Left cardiac atrium (tissue), 4 donors: ENCODE measurements at regions of chr4 and their contacts with region 1.

Region 1: DNA sequence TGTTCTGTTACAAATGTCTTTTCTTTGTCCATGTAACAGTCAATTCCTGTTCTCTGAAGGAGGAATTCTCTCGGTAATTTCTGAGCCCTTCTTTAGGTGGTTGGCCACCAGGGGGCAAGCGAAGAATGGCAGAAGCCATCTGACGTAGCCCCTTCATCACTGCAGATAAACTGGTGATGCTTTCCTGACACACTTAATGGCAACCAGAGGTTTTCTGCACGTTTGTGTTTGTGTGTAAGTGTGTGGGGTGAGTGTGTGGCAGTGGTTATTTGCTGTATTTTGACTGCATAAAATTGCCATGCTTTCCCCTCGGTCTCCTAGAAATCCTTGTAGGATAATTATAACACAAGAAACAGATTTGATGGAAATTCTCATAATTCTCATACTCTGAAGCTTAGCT is 64.8 kb upstream of the STOX2 start:
- DNase-seq: peak; percentile 86
- ATAC-seq: peak; percentile 81 to 83

Region 2: DNA sequence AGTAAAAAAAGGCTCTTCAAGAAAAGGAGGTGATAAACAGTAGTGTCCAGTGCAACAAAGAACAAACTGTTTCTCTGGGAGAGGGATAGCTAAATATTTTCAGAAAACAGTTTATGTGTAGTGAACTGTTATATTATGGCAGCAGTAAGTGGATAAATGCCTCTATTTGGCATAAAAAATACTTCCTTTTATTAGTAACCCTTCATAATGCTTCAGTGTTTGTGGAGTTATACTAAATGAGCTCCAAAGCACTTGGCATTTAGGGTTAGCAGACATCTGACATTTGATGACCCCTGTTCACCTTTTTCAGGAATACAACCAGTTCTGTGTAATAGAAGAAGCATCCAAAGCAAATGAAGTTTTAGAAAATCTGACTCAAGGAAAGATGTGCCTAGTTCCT is 149.3 kb before region 1 on chr4:
- intact Hi-C with region 1: no loop called
- DNase-seq: no peak
- ATAC-seq: no peak

Region 3: GRCh38 chr4:183905081-183905592 is 64.8 kb after region 1 on chr4 and contains the start of gene STOX2:
- intact Hi-C with region 1: loop called (anchors 5 to 10 kb)
- DNase-seq: peak; percentile 85
- ATAC-seq: peak; percentile 88 to 95
- total RNA-seq, gene STOX2: 9.1 to 11.2 TPM

Region 4: DNA sequence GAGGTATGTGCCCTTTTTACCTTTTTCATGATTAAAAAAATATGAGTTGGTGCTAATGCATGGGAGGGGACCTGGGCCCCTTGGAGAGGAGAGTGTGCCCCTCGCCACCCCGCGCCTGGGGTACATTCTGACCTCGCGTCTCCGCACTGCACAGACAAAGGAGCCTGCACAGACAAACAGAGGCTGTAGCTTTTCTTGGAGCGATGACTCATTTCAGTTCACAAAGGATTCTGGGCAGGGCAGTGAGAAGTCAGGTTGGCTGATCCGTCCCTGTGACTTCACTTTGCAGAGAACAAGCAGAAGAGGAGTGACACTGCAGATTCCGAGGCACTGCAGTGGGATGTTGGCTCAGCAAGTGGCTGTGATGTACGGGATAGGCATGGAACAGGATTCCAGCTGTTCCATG is 147.7 kb after region 1 on chr4:
- intact Hi-C with region 1: loop called in 1 of 2 experiments (anchors 5 kb)
- DNase-seq: peak; percentile 76
- ATAC-seq: peak; percentile 93 to 94

Region 5: DNA sequence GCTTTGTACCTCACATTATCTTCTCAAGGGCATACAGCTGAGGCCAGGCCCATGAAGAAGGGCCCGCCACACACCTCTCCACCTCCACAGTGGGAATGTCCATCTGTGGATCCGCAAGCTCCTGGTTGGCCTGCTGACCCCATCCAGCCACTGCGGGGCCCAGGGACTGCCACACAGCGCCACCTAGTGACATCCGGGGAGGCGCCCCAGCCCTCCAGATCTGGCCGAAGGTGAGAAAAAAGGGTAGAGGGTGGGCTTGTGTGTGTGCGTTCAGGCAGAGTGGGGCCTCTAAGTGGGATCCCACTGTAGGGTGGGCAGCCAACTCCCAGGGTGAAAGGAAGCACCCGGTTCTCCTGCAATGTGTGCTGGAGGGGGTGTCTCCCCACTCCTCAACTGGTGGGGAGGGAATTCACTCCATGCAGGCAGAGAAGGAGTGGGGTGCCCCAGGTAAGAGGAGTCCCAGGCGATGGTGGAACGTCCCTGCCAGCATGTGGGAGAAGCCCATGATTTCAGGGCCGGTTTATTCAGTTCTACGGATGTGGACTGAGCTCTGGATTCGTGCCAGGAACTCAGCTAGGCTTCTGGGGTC is 260.1 kb after region 1 on chr4:
- intact Hi-C with region 1: loop called (anchors 2 to 5 kb)
- DNase-seq: peak; percentile 37
- ATAC-seq: peak; percentile 40 to 85

Region 6: GRCh38 chr4:184168406-184169019 is 328.2 kb after region 1 on chr4:
- intact Hi-C with region 1: loop called (anchors 1 to 5 kb)
- DNase-seq: peak; percentile 77
- ATAC-seq: peak; percentile 97 to 98